ENCODE measurements at regions of chr20 and their contacts with region 1.

Region 1: GRCh38 chr20:46316984-46317684 is 8.8 kb upstream of the CDH22 start:
- H3K4me3 Mint-ChIP-seq: no peak overlapping the region
- H3K27ac Mint-ChIP-seq: no peak overlapping the region
- H3K4me1 Mint-ChIP-seq: peaks cover 2% of the 10 kb centered on the region
- H3K27me3 Mint-ChIP-seq: peaks cover 75% of the 10 kb centered on the region

Region 2: GRCh38 chr20:46330072-46330763 is 13.1 kb after region 1 on chr20:
- intact Hi-C with region 1: loop called (anchors 1 kb)
- H3K4me3 Mint-ChIP-seq: no peak overlapping the region
- H3K27ac Mint-ChIP-seq: no peak overlapping the region
- H3K4me1 Mint-ChIP-seq: no peaks in the 10 kb centered on the region
- H3K27me3 Mint-ChIP-seq: peaks cover 42% of the 10 kb centered on the region

Measured in dendritic cell treated with granulocyte-macrophage colony-stimulating factor and Interleukin-4, amounts not matched to agents 40 ng/mL and 50 ng/mL, for 4 days (primary cell).